ENCODE measurements at regions of chr1 and their contacts with region 1.

Region 1: GRCh38 chr1:155172732-155173477 is at the start of gene KRTCAP2:
- DNase-seq: peak; percentile 95
- ATAC-seq: peak; percentile 85
- H3K4me3 ChIP-seq: peak within 1 kb of the TSS; percentile 27 to 95 (median 73)
- H3K4me3 Mint-ChIP-seq: peak within 1 kb of the TSS; percentile 97
- H3K27ac ChIP-seq: peak within 1 kb of the TSS; percentile 89 to 92
- H3K27ac Mint-ChIP-seq: peak within 1 kb of the TSS; percentile 98
- H3K4me1 ChIP-seq: peaks cover 24 to 35% of the 10 kb centered on the region in 2 donors
- H3K4me1 Mint-ChIP-seq: peaks cover 40% of the 10 kb centered on the region
- H3K27me3 ChIP-seq: no peaks in the 10 kb centered on the region
- H3K27me3 Mint-ChIP-seq: no peaks in the 10 kb centered on the region
- CTCF ChIP-seq: peak; percentile 89
- total RNA-seq, gene KRTCAP2: 136 and 151 TPM in 2 replicates

Region 2: DNA sequence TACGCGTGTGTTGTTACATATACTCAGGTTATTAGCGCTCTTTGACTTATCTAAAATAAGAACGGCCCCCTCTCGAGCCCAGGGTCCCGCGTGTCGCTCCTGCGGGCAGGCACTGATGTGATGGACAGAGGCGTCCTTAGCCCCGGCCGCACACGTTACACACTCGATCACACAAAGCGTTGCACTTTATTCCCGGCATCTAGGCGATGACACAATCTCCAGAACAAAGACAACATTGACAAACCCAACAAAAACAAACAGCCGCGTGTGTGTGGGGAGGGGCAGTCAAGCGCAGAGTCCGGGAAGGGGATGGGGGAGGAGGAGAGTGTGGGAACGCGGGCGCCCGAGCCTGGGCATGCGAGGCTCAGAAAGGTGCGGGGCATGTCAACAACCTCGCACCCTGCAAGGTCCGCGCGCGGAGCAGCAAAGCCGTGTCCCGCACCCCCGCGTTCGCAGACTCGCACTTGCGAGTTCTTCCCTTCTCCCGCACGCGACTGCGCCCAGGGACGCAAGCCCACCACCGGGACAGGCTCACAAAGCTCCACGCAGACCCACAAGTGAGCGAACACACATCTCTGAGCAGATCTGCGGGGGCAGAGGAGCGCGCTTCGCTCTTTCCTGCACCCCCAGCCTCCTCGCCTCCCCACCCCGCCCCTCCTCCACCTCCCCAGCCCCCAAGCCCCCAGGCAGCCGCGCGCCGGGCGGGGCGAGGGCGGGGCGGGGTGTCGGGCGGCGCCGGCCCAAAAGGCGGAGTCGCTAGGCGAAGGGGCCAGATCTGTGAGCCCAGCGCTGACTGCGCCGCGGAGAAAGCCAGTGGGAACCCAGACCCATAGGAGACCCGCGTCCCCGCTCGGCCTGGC is 45.6 kb before region 1 on chr1 and contains the start of gene EFNA1:
- CTCF ChIA-PET with region 1: interaction called, 15 read pairs
- POLR2A ChIA-PET with region 1: interaction called, 3 read pairs
- intact Hi-C with region 1: loop called (anchors 5 kb)
- DNase-seq: peak; percentile 53
- ATAC-seq: peak; percentile 77
- H3K4me3 ChIP-seq: peak within 1 kb of the TSS; percentile 32 to 58 (median 49)
- H3K4me3 Mint-ChIP-seq: peak within 1 kb of the TSS; percentile 93
- H3K27ac ChIP-seq: no peak within 1 kb of the TSS
- H3K27ac Mint-ChIP-seq: peak within 1 kb of the TSS; percentile 78
- H3K4me1 ChIP-seq: peaks cover 34 to 36% of the 10 kb centered on the region in 2 donors
- H3K4me1 Mint-ChIP-seq: peaks cover 34% of the 10 kb centered on the region
- H3K27me3 ChIP-seq: peaks cover 0 to 54% (median 27%) of the 10 kb centered on the region in 4 experiments
- H3K27me3 Mint-ChIP-seq: peaks cover 52% of the 10 kb centered on the region
- CTCF ChIP-seq: no peak
- total RNA-seq, gene EFNA1: 0.56 TPM in 1 of 2 replicates, not detected in the other

Region 3: GRCh38 chr1:155185351-155186066 is 12.6 kb after region 1 on chr1:
- CTCF ChIA-PET with region 1: interaction called, 27 read pairs
- POLR2A ChIA-PET with region 1: interaction called, 10 read pairs
- intact Hi-C with region 1: no loop called
- DNase-seq: peak; percentile 79
- ATAC-seq: peak; percentile 97
- H3K4me3 ChIP-seq: peak overlapping the region in 1 of 5 experiments; percentile 1
- H3K4me3 Mint-ChIP-seq: peak overlapping the region; percentile 23
- H3K27ac ChIP-seq: peak overlapping the region; percentile 38 to 41
- H3K27ac Mint-ChIP-seq: peak overlapping the region; percentile 86
- H3K4me1 ChIP-seq: peaks cover 18 to 31% of the 10 kb centered on the region in 2 donors
- H3K4me1 Mint-ChIP-seq: peaks cover 28% of the 10 kb centered on the region
- H3K27me3 ChIP-seq: no peaks in the 10 kb centered on the region
- H3K27me3 Mint-ChIP-seq: no peaks in the 10 kb centered on the region
- CTCF ChIP-seq: peak; percentile 24

Region 4: DNA sequence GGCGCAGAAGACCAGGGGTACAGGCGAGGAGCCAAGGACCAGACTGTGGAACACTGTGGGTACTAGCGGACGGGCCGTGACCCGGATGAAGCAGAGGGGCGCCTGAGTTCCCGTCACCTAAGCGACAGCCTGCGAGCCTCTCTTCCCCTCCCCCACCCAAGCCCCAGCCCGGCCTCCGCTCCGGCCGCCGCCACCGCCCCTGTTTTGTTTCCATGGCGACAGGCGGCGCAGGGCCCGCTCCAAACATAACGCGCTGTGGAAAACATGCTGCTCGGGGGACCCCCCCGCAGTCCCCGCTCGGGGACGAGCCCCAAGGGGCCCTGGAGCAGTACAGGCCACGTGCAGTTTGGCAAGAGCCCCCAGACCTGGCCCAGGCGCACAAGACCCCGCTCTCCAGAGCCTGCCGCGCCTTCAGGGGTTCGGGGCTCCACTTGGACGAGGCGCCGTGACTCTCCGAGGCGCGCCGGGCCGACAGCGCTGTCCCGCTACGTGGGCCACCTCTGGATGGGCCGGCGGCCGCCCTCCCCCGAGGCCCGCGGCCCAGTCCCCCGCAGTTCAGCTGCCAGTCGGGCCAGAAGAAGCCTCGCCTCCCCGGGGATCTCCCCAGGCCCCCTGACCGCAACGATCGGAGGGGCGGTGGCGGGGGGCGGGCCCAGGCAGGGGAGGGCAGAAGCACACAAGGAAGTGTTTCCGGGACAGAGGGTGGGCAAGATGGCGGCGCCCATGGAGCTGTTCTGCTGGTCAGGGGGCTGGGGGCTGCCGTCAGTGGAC is 35.8 kb after region 1 on chr1 and contains the start of gene MTX1:
- CTCF ChIA-PET with region 1: interaction called, 13 read pairs
- POLR2A ChIA-PET with region 1: no interaction called
- intact Hi-C with region 1: loop called (anchors 1 kb)
- DNase-seq: peak; percentile 95
- ATAC-seq: peak; percentile 79
- H3K4me3 ChIP-seq: peak within 1 kb of the TSS; percentile 67 to 94 (median 84)
- H3K4me3 Mint-ChIP-seq: peak within 1 kb of the TSS; percentile 81
- H3K27ac ChIP-seq: peak within 1 kb of the TSS; percentile 95 to 100
- H3K27ac Mint-ChIP-seq: peak within 1 kb of the TSS; percentile 91
- H3K4me1 ChIP-seq: peaks cover 21 to 26% of the 10 kb centered on the region in 2 donors
- H3K4me1 Mint-ChIP-seq: peaks cover 22% of the 10 kb centered on the region
- H3K27me3 ChIP-seq: no peaks in the 10 kb centered on the region
- H3K27me3 Mint-ChIP-seq: no peaks in the 10 kb centered on the region
- CTCF ChIP-seq: no peak
- total RNA-seq, gene MTX1: 18.4 and 19.0 TPM in 2 replicates

Region 5: DNA sequence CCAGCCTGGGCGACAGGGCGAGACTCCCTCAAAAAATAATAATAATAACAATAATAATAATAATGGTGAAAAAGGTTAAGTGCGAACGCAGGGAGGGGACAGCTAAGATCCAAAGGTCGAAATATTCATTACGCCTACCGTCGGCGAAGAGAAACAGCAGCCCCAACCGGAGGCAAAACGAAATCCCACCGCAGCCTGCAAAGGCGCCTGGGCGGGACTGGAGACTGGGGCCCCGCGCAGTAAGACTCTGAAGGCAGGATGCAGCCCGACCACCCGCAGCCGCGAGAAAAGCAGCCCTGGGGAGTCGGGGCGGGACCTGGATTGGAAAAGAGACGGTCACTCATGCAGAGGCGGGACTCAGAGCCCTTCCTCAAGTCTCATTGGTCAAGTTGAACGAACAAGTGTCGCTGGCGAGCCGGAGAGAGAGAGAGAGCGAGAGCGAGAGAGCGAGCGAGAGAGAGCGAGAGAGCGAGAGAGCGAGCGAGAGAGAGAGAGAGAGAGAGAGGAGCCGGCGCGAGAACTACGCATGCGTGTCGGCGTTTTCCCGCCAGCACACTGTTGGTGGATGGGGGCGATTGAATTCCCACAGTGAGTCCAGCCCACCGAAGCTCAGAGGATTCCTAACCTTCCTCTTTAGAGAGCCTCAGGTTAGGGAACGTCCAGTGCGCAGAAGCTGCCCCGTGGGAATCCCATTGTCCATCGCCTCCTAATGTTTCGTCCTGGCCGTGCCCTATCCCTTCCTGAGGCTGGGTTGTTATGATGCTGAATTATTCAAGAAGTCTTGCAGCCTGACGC is 71.7 kb after region 1 on chr1:
- CTCF ChIA-PET with region 1: interaction called, 4 read pairs
- POLR2A ChIA-PET with region 1: interaction called, 8 read pairs
- intact Hi-C with region 1: loop called (anchors 5 kb)
- DNase-seq: peak; percentile 95
- ATAC-seq: peak; percentile 97
- H3K4me3 ChIP-seq: peak overlapping the region; percentile 60 to 79 (median 67)
- H3K4me3 Mint-ChIP-seq: peak overlapping the region; percentile 82
- H3K27ac ChIP-seq: peak overlapping the region; percentile 62 to 71
- H3K27ac Mint-ChIP-seq: peak overlapping the region; percentile 96
- H3K4me1 ChIP-seq: peaks cover 27 to 36% of the 10 kb centered on the region in 2 donors
- H3K4me1 Mint-ChIP-seq: peaks cover 33% of the 10 kb centered on the region
- H3K27me3 ChIP-seq: no peaks in the 10 kb centered on the region
- H3K27me3 Mint-ChIP-seq: peaks cover 4% of the 10 kb centered on the region
- CTCF ChIP-seq: peak; percentile 45